ENCODE measurements at regions of chr5 and their contacts with region 1.

Region 1: GRCh38 chr5:140401362-140402257 is at the start of gene ANKHD1:
- DNase-seq: peak; percentile 98 to 100 (median 98)

Region 2: DNA sequence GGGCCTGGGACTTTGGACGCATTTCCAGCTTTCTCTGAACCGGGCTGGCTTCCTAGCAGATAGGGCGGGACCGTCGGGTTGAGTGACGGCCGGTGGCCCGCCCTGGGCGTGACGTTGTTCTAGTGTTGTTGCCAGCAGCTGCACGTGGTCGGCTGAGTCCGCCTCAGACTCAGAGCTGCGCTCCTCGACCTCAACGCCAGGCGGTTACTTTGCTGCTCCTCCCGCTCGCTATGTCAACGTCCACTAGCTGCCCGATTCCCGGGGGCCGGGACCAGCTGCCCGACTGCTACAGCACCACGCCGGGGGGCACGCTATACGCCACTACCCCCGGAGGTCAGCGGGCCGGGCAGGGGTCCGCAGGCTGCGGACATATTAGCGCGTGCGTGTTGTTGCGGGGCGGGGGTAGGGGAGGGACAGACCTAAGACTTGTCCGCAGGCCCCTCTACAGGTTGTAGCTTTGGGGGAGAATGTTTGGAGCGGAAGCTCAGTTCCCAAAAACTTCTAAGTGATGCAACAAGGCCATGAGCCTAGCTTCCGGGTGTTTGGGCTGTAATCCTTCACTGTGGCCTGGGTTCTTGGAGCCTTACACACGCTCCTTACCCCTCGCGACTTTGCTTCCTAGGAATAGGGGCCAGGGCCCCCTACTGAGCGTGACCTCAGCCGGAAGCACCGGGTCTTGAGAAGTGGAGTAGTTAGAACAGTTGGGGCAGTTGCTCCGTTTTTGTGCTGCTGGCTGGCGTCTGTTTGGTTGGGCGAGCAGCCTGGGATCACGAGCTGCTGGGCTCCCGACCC is 146.1 kb after region 1 on chr5 and contains the start of gene EIF4EBP3:
- intact Hi-C with region 1: loop called (anchors 5 kb)
- DNase-seq: peak; percentile 93 to 99 (median 96)

Region 3: DNA sequence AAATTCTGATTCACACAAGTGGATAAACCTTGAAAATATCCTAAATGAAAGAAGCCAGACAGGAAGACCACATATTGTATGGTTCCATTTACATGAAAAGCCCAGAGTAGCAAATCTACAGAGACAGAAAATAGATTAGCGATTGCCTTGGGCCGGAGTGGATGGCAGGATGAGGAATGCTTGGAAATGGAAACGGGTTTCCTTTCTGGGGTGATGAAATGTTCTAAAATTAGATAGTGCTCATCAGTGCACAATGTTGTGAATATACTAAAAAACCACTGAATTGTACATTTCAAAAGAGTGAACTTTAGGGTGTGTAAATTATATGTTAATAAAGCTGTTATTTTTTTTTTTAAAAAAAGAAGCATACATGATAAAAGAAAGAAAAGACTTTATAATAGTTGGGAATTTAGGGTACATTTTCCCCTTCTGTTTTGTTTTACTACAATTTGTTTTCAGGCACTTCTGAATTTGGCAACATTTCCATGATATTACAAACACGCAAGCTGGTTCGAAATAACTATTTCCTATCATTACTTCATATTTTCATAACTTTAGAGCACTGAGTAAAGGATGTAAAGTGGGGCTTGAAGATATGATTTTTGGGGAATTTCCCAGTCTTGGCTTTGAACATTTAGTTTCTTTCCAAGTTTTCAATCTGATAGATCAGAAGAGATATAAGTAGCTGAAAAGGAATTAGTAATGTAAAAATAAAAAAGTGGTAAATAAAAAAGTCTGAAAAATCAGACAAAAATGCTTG is 186.9 kb after region 1 on chr5:
- intact Hi-C with region 1: no loop called
- DNase-seq: no peak